ENCODE measurements at regions of chr18 and their contacts with region 1.

Region 1: GRCh38 chr18:26071725-26072124 is 18.7 kb downstream of the SS18 start:
- DNase-seq: no peak
- ATAC-seq: no peak
- H3K4me3 ChIP-seq: no peak overlapping the region
- H3K27ac ChIP-seq: no peak overlapping the region
- H3K4me1 ChIP-seq: peaks cover 12% of the 10 kb centered on the region; the same call in 1 of the 3 replicates
- CTCF ChIP-seq: no peak
- EP300 ChIP-seq: no peak
- POLR2A ChIP-seq: no peak
- RAD21 ChIP-seq: no peak

Region 2: DNA sequence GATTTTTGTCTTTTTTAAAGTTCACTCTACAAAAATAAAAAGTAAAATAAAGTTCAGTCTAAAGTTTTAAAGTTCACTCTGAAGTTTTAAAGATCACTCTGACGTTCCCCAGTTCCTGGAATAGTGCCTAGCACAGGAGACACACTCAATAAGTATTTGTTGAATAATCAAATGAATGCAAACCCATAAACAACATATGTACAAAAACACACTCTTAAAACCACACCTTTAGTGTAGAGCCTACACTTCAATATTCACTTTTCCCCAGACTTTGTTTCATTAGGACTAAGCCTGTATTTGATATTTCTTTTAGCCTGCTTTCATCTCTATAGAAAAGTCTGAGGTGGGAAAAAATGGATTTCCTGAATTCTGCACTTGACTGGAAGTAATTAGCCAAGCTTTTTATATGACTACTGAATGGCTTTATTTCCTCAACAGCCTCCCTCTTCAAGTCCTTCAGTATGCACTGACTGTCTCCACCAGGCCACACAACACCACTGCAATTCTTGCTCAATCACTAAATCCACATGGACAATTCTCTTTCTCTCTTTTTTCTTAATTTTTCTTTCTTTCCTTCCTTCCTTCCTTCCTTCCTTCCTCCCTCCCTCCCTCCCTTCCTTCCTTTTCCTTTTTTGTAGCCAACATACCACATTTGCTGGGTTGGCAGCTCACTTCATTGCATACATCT is 85.9 kb before region 1 on chr18:
- CTCF ChIA-PET with region 1: no interaction called
- POLR2A ChIA-PET with region 1: interaction called, 19 read pairs
- DNase-seq: no peak
- ATAC-seq: no peak
- H3K4me3 ChIP-seq: no peak overlapping the region
- H3K27ac ChIP-seq: no peak overlapping the region
- H3K4me1 ChIP-seq: no peaks in the 10 kb centered on the region
- CTCF ChIP-seq: no peak
- EP300 ChIP-seq: no peak
- POLR2A ChIP-seq: no peak
- RAD21 ChIP-seq: no peak

Region 3: DNA sequence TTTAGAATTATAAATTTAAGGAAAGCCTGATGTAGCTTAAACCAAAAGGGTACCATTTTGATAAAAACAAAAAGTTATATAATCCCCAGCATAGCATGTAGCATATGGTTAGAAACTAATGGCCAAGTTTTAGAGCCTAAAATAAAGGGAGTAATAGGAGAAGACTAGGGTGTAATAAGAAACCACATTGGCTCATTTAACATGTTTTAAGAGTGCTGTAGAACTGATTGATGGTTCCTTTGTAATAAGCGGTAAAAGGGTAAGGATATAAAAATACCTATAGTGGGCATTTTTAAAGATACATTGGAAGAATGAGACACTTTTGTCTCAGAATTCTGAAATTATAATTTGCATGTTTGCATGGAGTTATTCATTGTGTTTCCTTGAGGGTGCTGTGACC is 63.8 kb after region 1 on chr18:
- CTCF ChIA-PET with region 1: no interaction called
- POLR2A ChIA-PET with region 1: no interaction called
- DNase-seq: no peak
- ATAC-seq: no peak
- H3K4me3 ChIP-seq: no peak overlapping the region
- H3K27ac ChIP-seq: no peak overlapping the region
- H3K4me1 ChIP-seq: no peaks in the 10 kb centered on the region
- CTCF ChIP-seq: no peak
- EP300 ChIP-seq: no peak
- POLR2A ChIP-seq: no peak
- RAD21 ChIP-seq: no peak

Measured in A549 (cell line).